Cardiac septum (tissue), 1 donor: ENCODE measurements at regions of chr4 and their contacts with region 1.

Region 1: DNA sequence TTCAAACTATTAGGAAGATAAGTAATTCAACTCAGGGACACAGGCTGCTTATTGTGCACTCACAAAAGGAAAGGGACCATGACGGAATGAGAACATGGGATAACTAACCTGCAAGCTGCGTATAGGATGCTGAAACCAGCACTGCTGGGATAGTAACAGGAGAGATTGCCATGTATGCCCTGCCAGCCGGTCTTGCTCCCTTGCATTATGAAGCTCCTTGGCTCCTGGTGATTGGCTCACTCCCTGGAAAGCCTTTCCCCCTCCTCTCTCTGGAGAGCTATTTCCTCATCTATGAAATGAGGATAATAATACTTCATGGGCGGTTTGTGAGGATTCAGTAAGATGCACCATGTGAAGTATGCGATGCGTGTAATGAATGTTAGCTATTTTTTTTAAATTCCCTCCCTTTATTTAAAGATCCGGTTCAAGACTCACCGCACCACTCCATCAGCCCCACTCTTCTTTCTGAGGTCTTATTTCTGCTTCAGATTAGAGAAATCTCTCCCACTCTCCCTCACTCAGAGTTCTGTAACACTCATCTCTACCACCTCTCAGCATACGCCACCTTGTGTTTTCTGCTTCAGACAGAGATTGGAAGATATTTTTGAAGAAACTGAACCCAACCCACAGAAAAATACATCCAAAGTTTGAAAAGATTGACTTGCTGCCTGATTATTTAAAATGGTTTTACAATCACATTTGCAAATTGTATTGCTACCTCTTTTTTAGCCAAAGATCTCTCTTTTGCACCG is 18.4 kb downstream of the MSMO1 start:
- DNase-seq: no peak

Region 2: GRCh38 chr4:165131247-165131832 is 214.5 kb before region 1 on chr4:
- intact Hi-C with region 1: loop called (anchors 5 kb)
- DNase-seq: no peak

Region 3: DNA sequence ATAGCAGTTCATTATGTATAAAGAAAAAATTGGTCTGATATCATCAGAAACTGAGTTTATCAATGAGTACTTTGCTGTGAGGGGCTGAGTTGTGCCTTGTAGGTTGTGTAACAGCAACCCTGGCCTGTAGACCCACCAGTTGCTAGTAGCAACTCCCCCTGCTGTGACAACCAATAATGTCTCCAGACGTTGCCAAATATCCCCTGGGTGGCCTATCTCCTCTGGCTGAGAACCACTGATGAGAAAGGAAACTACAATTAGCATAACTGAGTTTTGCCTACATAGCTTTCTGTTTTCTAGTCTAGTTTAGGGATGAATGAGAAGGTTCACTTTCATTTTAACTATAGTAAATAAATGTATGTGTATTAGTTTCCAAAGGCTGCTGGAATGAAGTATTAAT is 267.1 kb after region 1 on chr4:
- intact Hi-C with region 1: no loop called
- DNase-seq: no peak